Heart left ventricle (tissue), 16 donors: ENCODE measurements at regions of chr12 and their contacts with region 1.

Region 1: DNA sequence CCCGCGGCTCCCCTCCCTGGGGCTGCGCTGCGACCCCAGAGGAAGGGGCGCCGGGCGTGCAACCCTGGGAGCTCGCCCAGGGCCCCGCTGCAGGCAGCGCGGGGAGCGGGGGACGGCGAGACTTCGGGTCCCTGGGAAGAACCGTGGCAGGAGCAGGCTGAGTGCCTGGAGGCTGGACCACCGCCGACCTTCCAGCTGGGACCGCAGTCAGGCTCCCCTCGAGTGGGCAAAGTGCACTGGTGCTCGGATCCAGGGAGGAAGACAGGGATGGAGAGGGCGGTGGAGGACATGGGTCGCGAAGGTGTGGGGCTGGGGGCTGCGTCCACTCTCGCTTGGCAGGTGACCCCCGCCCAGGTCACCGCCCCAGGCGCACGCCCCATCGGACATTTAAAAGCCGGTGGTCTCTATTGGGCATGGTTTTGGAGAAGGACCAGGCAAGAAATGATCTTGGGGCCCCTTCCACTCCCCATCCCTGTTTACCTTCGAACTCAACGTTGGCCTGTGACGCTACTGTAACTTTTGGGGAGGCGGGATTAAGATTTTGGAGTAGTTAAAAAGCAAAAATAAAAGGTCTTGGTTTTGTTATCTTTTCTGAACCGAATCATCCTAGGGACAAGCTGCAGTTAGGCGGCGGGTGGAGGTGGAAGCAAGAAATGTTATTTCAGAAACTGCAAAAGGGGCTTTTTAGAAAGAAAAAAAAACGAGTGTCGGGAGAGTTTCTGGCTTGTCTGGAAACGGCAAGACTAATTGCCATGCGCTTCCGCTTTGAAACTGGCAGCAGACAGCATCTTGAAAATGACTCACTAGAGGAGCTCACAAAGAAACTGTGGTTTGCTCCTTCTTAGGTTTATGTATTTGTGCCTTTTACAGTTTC is 1.0 kb downstream of the ELK3 start:
- DNase-seq: peak; percentile 32 to 67 (median 46)
- ATAC-seq: peak in 2 of 4 donors; percentile 52 to 56
- H3K4me3 ChIP-seq: peak overlapping the region; percentile 58 to 98 (median 78)
- H3K27ac ChIP-seq: peak overlapping the region; percentile 74 to 95 (median 88)
- H3K4me1 ChIP-seq: peaks cover 3 to 58% (median 15%) of the 10 kb centered on the region in 12 donors
- H3K27me3 ChIP-seq: no peaks in the 10 kb centered on the region
- CTCF ChIP-seq: no peak
- POLR2A ChIP-seq: no peak

Region 2: DNA sequence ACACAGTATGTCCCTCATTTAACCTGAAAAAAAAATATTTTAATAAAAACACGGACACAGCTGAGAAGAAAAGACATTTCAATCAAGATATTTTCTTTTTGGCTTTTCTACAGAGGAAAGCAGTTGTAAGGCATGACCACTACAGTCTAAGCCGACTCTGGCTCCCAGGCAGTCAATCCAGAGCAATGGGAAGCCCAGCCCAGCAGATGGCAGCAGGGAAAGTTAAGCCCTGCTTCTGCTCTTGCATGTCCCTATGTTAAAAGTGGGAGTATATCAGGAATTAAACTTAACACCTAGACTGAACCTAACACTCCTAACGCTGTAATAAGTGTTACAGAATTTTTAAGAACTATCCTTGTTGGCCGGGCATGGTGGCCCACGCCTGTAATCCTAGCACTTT is 179.5 kb before region 1 on chr12:
- intact Hi-C with region 1: no loop called
- DNase-seq: peak in 1 of 5 donors; percentile 44
- ATAC-seq: peak; percentile 50 to 73 (median 70)
- H3K4me3 ChIP-seq: no peak overlapping the region
- H3K27ac ChIP-seq: no peak overlapping the region
- H3K4me1 ChIP-seq: peaks cover 0 to 16% (median 3%) of the 10 kb centered on the region in 12 donors
- H3K27me3 ChIP-seq: no peaks in the 10 kb centered on the region
- CTCF ChIP-seq: peak; percentile 22 to 59 (median 40)
- POLR2A ChIP-seq: no peak

Region 3: DNA sequence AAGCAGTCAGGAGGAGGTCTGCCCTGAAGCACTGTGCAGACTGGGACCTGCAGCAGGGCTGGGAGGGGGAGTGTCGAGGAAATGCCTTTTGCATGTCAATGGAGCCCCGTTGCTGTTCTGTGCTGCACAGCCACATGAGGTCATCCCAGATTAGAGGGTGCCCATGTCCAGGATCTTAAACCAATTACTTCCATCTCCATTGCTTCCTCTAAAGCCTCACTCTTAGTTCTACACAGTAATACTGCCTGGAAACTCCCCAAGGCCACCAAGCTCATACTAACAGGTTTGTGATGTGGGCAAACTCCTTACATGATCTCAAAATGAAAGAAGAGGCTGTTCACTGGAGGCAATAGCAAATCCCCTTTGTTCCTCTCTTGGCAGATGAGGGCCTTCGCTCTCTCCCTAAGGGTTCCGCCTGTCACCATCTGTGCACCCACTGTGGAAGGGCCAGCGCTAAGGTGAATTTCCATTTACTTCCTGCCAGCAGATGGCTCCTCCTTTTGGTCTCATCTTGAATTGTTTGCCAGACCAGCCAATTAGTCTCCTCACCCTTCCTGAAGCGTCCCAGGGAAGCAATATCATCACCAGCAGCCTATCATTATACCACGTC is 124.4 kb before region 1 on chr12:
- intact Hi-C with region 1: loop called in 1 of 10 experiments (anchors 5 kb)
- DNase-seq: no peak
- ATAC-seq: peak; percentile 37 to 64 (median 48)
- H3K4me3 ChIP-seq: no peak overlapping the region
- H3K27ac ChIP-seq: peak overlapping the region in 7 of 12 donors; percentile 10 to 46 (median 39)
- H3K4me1 ChIP-seq: peaks cover 0 to 31% (median 9%) of the 10 kb centered on the region in 12 donors
- H3K27me3 ChIP-seq: peaks cover 0 to 4% (median 0%) of the 10 kb centered on the region in 9 donors
- CTCF ChIP-seq: peak in 4 of 12 donors; percentile 7 to 34 (median 26)
- POLR2A ChIP-seq: no peak